Mammary epithelial cell (primary cell): ENCODE measurements at regions of chr18 and their contacts with region 1.

Region 1: DNA sequence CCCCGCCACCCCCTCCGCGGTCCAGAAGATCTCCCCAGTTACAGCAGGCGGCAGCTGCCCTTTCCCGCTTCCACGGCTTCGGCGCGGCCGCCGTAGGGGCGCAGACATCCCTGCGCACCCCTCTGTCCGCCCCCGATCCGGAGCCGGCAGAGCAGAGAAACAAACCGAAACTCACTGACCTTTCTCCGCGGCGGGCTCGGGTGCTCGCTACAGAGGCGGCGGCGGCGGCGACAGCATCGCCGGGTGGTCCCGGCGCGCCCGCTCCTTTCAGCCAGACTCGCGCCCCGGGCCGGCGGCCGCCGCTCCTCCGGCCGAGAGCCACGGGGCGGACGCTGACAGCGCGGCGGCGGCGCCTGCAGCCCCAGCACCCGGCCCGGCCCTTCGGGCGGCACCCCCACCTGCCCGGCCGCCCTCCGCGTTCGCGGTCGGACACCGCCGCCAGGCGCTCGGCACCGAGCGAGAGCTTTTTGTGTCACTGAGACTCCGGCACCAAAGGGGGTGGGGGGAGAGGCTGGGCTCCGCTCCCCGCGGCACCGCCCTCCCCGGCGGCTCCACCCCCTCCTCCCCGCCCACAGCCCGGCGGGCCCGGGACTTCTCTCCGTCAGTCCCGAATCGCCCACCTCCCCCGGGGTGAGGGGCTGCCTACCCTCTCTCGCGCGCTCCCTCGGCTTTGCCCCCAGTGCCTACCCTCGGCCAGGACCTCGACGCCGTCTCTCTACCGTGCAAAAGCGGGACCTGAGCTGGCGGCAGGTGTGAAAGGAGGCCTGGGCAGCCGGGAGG is 1.4 kb upstream of the RNF152 start:
- DNase-seq: peak; percentile 79
- H3K4me3 ChIP-seq: peak overlapping the region; percentile 66 to 91 (median 79)
- H3K27ac ChIP-seq: peak overlapping the region; percentile 48
- H3K4me1 ChIP-seq: peaks cover 45% of the 10 kb centered on the region
- H3K27me3 ChIP-seq: no peaks in the 10 kb centered on the region
- CTCF ChIP-seq: peak in 1 of 2 donors; percentile 49

Region 2: DNA sequence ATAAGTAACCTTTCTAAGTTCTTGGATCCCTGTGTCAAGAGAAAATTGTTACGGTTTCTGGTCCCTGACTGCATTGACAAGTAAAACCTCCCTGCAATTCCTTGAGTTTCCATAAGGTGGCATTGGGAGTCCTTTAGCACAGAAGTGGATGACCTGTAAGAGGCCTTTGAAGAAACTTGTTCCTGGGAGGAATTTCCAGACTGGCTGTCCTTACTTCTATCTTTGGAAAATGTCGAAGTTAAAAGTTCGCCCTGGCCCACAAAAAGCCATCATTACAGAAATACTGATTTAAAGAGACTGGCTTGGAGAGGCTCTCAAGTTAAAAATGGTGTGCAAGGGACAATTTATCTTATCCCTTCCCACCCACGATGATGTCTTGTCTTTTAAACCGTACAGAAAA is 342.6 kb before region 1 on chr18:
- CTCF ChIA-PET with region 1: no interaction called
- dilution Hi-C with region 1: no loop called
- in situ Hi-C with region 1: loop called in 1 of 2 experiments (anchors 10 kb)
- intact Hi-C with region 1: loop called (anchors 1 kb)
- DNase-seq: peak; percentile 68
- H3K4me3 ChIP-seq: no peak overlapping the region
- H3K27ac ChIP-seq: no peak overlapping the region
- H3K4me1 ChIP-seq: peaks cover 4% of the 10 kb centered on the region
- H3K27me3 ChIP-seq: no peaks in the 10 kb centered on the region
- CTCF ChIP-seq: peak; percentile 82 to 95

Region 3: DNA sequence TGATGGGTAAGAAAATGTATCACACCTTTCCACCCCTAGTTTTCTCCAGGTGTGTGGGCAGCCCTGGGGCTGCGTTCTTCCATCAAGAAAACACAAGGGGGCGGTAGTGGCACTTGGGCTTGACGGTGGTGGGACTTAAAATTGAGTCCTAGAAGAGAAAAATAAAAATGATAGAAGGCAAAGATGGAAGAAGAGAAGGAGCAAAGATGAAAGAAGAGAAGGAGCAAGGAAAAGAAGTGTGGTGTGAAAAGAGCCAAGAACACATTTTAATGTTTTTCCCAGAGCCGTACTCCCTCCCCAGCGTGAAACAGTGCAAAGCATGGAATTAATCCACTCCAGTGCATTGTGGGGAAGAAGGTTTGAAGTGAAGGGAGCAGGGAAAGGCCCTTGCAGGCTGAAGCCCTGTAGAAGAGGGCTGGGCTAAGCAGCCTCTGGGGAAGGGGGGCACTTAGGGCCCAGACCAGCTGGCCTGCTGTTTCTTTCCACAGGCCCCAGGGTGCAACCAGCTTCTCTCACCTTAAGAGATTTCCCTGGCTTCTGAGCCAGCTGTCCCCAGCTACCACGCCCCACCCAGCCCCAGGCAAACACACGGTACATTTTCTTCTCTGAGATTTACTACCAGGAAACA is 258.1 kb before region 1 on chr18:
- CTCF ChIA-PET with region 1: interaction called, 8 read pairs
- dilution Hi-C with region 1: no loop called
- in situ Hi-C with region 1: no loop called
- intact Hi-C with region 1: loop called (anchors 1 kb)
- DNase-seq: peak; percentile 45
- H3K4me3 ChIP-seq: no peak overlapping the region
- H3K27ac ChIP-seq: no peak overlapping the region
- H3K4me1 ChIP-seq: peaks cover 3% of the 10 kb centered on the region
- H3K27me3 ChIP-seq: no peaks in the 10 kb centered on the region
- CTCF ChIP-seq: peak; percentile 80 to 81

Region 4: GRCh38 chr18:61955644-61956043 is 61.5 kb after region 1 on chr18:
- CTCF ChIA-PET with region 1: no interaction called
- dilution Hi-C with region 1: no loop called
- in situ Hi-C with region 1: no loop called
- intact Hi-C with region 1: loop called (anchors 1 kb)
- DNase-seq: no peak
- H3K4me3 ChIP-seq: no peak overlapping the region
- H3K27ac ChIP-seq: no peak overlapping the region
- H3K4me1 ChIP-seq: peaks cover 30% of the 10 kb centered on the region
- H3K27me3 ChIP-seq: no peaks in the 10 kb centered on the region
- CTCF ChIP-seq: no peak